Left ventricle myocardium superior (tissue), 1 donor: ENCODE measurements at regions of chr2 and their contacts with region 1.

Region 1: GRCh38 chr2:25664183-25664964 is 9.0 kb downstream of the DTNB start:
- DNase-seq: no peak
- ATAC-seq: peak; percentile 82

Region 2: GRCh38 chr2:25606892-25607291 is 57.5 kb before region 1 on chr2:
- intact Hi-C with region 1: loop called (anchors 10 kb)
- DNase-seq: no peak
- ATAC-seq: no peak

Region 3: DNA sequence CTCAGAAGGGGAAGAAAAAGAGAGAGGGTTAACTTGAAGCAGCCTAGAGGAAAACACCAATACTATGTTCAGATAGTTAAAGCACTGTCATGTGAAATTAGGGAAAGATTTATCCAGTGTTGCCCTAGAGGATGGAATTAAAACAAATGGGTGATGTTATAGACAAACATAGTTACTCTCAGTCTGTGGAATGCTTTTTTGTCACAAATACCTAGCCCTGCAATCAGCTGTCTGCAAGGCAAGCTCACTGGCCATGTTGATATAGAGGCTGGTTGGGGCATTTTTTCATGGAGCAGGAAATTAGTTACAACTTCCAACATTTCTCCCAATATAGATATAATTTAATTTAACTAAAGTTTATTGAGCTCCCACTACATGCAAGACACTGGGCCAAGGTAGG is 361.1 kb after region 1 on chr2:
- intact Hi-C with region 1: no loop called
- DNase-seq: no peak
- ATAC-seq: no peak